Activated CD4-positive, alpha-beta T cell treated with anti-CD3 and anti-CD28 coated beads, Interleukin-2, amount 10 ng/mL, durations not matched to agents 7 days and 5 days (primary cell): ENCODE measurements at regions of chr15 and their contacts with region 1.

Region 1: GRCh38 chr15:71743861-71744382 is 66.4 kb upstream of the NR2E3 start:
- DNase-seq: peak; percentile 71
- H3K4me3 Mint-ChIP-seq: no peak overlapping the region
- H3K27ac Mint-ChIP-seq: no peak overlapping the region
- H3K4me1 Mint-ChIP-seq: no peaks in the 10 kb centered on the region
- H3K27me3 Mint-ChIP-seq: peaks cover 2% of the 10 kb centered on the region

Region 2: DNA sequence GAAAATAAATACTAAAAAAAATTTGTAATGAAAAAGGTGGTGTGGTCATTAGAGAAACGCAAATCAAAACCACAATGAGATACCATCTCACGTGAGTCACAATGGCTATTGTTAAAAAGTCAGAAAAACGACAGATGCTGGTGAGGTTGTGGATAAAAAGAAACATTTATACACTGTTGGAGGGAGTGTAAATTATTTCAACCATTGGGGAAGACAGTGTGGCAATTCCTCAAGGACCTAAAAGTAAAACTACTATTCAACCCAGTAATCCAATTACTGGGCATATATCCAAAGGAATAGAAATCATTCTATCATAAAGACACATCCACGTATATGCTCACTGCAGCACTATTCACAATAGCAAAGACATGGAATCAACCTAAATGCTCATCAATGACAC is 253.8 kb after region 1 on chr15:
- CTCF ChIA-PET with region 1: no interaction called
- POLR2A ChIA-PET with region 1: no interaction called
- DNase-seq: no peak
- H3K4me3 Mint-ChIP-seq: no peak overlapping the region
- H3K27ac Mint-ChIP-seq: no peak overlapping the region
- H3K4me1 Mint-ChIP-seq: no peaks in the 10 kb centered on the region
- H3K27me3 Mint-ChIP-seq: no peaks in the 10 kb centered on the region

Region 3: DNA sequence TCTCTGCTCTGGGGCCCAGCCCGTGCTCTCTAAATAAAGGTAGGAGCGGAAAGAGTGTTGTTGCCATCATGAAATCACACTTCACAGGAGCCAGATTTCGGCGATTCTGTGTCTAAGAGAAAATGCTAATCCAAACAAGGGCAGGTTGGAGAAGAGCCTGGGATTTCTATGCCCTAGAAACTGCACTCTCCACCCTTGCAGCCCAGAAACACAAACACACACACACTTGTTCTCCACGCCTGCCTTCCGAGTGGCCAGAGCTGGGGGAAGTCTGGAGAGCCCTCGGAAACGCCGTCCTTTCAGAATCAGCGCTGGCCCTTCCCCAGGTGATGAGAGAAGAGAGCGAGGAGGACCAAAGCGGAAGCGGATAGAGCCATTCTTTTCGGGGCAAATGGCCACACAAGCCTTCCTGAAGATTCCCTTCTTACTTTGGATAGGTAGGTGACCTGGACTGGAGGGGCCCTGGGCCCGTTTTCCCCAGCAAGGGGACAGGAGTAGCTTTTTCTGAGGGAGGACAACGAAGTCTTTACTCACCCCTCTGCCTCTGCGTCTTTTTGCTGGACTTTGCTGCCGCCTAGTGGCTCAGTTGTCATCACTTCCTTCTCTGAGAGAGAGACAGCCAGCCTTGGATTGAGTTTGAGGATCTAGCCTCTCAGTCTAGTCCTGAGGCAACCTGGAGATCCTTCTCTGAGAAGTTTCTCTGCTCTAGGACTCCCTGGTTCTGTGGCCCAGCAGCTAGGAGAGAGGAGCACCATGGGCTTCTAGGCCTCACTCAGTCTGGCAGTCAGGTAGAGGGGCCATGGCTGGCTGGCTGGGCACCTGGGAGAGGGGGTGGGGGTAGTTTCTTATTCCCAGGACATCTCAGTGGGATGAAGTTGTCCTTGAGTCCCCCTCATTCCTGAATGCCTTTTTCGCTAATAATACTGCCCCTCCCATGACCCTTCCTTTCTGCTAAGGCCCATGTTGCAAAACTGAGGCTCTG is 412.0 kb after region 1 on chr15:
- CTCF ChIA-PET with region 1: interaction called, 12 read pairs
- POLR2A ChIA-PET with region 1: no interaction called
- DNase-seq: peak; percentile 87
- H3K4me3 Mint-ChIP-seq: peak overlapping the region; percentile 58
- H3K27ac Mint-ChIP-seq: peak overlapping the region; percentile 59
- H3K4me1 Mint-ChIP-seq: peaks cover 3% of the 10 kb centered on the region
- H3K27me3 Mint-ChIP-seq: peaks cover 3% of the 10 kb centered on the region